ENCODE measurements at regions of chrX and their contacts with region 1.

Region 1: DNA sequence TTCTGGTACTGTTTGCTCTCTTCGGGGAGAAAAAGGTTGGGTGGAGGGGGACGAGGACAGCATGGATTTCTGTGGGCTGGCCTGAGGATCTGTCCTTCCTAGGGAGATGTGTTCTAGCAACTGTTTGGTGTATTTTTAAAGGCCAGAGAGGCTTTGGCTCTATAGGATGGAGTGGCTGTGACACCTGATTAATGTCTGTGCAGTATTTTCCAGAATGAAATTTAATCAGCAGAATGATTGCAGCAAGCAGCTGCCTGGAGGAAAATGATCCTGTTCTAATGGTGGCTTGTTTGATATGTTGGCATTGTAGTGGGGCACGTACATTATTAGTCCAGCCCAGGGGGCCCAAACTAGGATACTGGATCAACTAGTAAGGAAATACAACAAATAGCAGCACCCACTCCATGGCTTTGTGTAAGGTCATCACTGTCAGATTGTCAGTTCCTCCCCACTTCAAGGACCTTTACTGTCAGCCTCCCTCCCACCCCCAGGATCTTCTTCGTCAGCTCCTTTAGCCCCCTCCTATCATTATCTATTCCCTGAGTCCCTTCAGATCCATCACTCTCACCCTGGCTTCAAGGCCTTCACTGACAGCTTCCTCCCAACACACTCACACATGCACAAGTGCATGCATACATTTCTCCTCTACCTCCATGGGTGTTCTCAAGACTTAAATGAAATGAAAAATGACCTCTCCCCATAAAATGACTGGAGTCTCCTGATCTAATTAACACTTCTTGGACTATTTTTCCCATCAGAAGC is 10.4 kb upstream of the TMEM255A start:
- DNase-seq: no peak
- ATAC-seq: no peak
- H3K4me3 ChIP-seq: no peak overlapping the region
- H3K27ac ChIP-seq: no peak overlapping the region
- H3K4me1 ChIP-seq: no peaks in the 10 kb centered on the region
- H3K27me3 ChIP-seq: peaks cover 12% of the 10 kb centered on the region
- CTCF ChIP-seq: no peak

Region 2: DNA sequence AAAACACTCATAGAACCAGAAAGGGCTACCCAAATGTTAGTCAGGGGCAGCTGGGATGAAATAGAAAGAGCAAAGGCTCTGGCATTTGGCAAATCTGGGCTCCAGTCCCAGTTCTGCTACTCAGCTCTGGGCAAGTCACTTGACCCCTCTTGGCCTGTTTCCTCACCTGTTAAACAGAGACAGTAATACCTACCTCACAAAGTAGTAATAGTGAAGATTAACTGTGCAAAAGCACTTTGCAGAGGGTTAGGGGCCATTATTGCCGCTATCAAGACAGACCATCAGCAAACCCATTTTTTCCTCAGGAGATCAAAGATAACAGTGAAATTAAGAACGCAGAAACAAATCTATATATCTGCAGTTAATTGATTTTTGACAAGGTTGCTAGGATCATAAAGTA is 50.5 kb before region 1 on chrX:
- CTCF ChIA-PET with region 1: no interaction called
- POLR2A ChIA-PET with region 1: no interaction called
- in situ Hi-C with region 1: no loop called
- intact Hi-C with region 1: no loop called
- DNase-seq: no peak
- ATAC-seq: no peak
- H3K4me3 ChIP-seq: no peak overlapping the region
- H3K27ac ChIP-seq: no peak overlapping the region
- H3K4me1 ChIP-seq: no peaks in the 10 kb centered on the region
- H3K27me3 ChIP-seq: peaks cover 11% of the 10 kb centered on the region
- CTCF ChIP-seq: no peak

Region 3: DNA sequence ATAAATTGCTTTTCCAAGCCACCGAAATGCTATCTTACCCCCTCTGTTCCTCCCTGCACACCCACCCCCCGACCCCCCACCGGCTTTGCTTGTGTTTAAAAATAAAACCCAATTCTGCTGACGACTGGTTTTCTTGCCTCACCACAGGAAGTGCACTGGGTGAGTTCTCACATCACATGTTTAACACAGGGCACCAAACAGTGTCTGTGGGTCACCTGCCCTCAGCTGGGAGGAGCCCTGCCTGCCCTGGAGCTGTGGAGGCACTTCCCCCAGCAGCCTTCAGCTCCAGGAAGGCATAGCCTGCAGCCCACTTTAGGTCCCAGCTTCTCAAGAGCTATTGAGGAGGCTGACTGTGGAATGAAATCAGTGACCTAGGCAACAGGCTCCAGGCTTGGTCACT is 19.3 kb before region 1 on chrX:
- CTCF ChIA-PET with region 1: no interaction called
- POLR2A ChIA-PET with region 1: interaction called, 13 read pairs
- in situ Hi-C with region 1: no loop called
- intact Hi-C with region 1: no loop called
- DNase-seq: no peak
- ATAC-seq: no peak
- H3K4me3 ChIP-seq: no peak overlapping the region
- H3K27ac ChIP-seq: no peak overlapping the region
- H3K4me1 ChIP-seq: no peaks in the 10 kb centered on the region; the same call in 1 of the 2 replicates
- H3K27me3 ChIP-seq: peaks cover 13% of the 10 kb centered on the region
- CTCF ChIP-seq: no peak

Region 4: DNA sequence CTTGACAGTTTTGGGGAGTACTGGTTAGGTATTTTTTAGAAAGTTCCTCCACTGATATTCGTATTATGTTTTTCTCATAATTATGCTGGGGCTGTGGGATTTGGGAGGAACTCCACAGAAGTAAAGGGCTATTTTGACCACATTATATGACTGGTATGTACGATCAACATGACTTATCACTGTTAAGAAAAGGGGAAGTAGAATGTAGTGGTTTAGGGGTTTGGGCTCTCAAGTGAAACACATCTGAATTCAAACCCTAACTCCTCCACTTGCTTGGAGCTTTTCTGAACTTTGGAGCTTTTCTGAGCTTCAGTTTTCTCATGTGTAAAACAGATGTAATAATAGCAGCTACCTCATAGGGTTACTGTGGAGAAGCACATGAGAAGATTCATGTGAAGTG is 404.6 kb after region 1 on chrX:
- CTCF ChIA-PET with region 1: no interaction called
- POLR2A ChIA-PET with region 1: no interaction called
- in situ Hi-C with region 1: no loop called
- intact Hi-C with region 1: no loop called
- DNase-seq: no peak
- ATAC-seq: no peak
- H3K4me3 ChIP-seq: no peak overlapping the region
- H3K27ac ChIP-seq: no peak overlapping the region
- H3K4me1 ChIP-seq: no peaks in the 10 kb centered on the region
- H3K27me3 ChIP-seq: no peaks in the 10 kb centered on the region
- CTCF ChIP-seq: no peak

Measured in Panc1 (cell line).